Spleen (tissue), 13 donors: ENCODE measurements at regions of chr1 and their contacts with region 1.

Region 1: DNA sequence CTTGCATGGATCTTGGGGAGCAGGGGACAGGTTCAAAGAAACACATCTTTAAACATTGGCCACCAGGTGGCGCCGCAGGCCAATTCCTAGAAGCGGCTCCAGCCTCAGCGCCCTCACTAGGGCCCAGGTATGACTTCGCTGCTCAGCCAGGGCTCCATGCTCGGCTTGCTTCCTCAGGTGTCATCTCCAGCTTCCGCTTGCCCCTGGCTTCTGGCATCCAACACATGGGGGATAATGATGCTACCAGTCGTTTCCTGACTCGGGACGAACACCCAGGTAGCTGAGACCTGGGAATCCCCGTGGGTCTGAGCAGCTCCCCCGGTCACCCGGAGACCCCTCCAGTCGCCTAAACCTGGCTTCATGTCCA is 8.5 kb upstream of the MEX3A start:
- DNase-seq: peak; percentile 95
- H3K4me3 ChIP-seq: no peak overlapping the region
- H3K27ac ChIP-seq: peak overlapping the region in 1 of 8 donors; percentile 42
- H3K4me1 ChIP-seq: peaks cover 9 to 29% (median 17%) of the 10 kb centered on the region in 6 donors
- H3K27me3 ChIP-seq: peaks cover 0 to 8% (median 0%) of the 10 kb centered on the region in 7 donors
- CTCF ChIP-seq: peak; percentile 27 to 88 (median 82)
- POLR2A ChIP-seq: no peak

Region 2: DNA sequence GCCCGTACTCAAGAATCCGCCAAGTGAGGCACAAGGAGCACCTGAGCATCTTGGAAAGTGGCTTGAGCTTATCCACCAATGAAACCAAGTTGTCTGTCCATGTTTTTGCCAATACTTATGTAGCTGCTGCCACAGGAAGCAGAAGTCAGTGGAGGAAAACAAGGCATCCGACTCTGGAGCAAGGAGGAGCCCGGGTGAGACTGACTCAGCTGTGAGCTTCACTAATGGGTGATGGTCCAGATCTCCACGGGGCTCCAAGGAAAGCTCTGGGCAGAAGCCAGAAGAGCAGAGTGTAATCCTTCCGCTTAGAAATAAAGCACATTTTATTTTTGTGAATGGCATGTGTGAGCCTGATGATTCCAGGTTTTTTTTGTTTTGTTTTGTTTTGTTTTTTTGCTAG is 57.8 kb before region 1 on chr1:
- intact Hi-C with region 1: no loop called
- DNase-seq: no peak
- H3K4me3 ChIP-seq: no peak overlapping the region
- H3K27ac ChIP-seq: no peak overlapping the region
- H3K4me1 ChIP-seq: no peaks in the 10 kb centered on the region
- H3K27me3 ChIP-seq: no peaks in the 10 kb centered on the region
- CTCF ChIP-seq: no peak
- POLR2A ChIP-seq: no peak

Region 3: GRCh38 chr1:156129706-156130581 is 39.1 kb after region 1 on chr1:
- intact Hi-C with region 1: loop called (anchors 2 kb)
- DNase-seq: peak; percentile 89
- H3K4me3 ChIP-seq: no peak overlapping the region
- H3K27ac ChIP-seq: peak overlapping the region; percentile 71 to 92 (median 82)
- H3K4me1 ChIP-seq: peaks cover 43 to 66% (median 58%) of the 10 kb centered on the region in 6 donors
- H3K27me3 ChIP-seq: peaks cover 0 to 16% (median 0%) of the 10 kb centered on the region in 7 donors
- CTCF ChIP-seq: peak; percentile 97 to 99 (median 98)
- POLR2A ChIP-seq: no peak

Region 4: GRCh38 chr1:156225677-156226014 is 134.8 kb after region 1 on chr1:
- intact Hi-C with region 1: loop called (anchors 5 kb)
- DNase-seq: no peak
- H3K4me3 ChIP-seq: no peak overlapping the region
- H3K27ac ChIP-seq: peak overlapping the region in 4 of 8 donors; percentile 50 to 64 (median 52)
- H3K4me1 ChIP-seq: peaks cover 0 to 31% (median 10%) of the 10 kb centered on the region in 6 donors
- H3K27me3 ChIP-seq: no peaks in the 10 kb centered on the region
- CTCF ChIP-seq: peak in 3 of 11 experiments; percentile 4 to 47 (median 22)
- POLR2A ChIP-seq: no peak

Region 5: DNA sequence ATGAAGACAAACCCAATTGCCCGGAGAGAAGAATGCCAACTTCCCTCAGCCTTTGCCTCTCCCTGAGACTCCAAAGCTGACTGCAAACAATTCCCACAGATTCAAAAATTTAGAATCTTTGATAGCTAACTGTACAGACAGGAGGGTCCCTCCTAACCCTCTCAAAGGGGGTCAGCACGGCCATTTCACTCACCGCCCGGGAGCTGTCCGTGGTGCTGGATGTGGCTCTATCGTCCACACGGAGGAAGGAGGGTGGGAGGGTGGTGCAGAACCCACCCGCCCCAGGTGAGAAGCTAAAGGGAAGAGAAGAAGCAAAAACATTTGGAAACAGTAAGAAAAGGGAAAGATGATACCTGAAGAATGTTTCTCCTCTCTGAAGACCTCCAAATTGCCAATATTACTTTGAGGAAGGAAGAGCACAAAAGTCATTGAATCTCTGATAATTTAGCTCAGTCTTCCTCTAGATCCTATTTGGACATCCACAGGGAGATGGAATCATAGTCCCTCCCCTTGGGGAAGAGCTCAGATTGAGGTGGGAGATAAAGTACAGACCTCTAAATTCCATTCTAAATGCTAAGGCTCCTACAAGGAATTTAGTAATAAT is 323.8 kb after region 1 on chr1:
- intact Hi-C with region 1: no loop called
- DNase-seq: no peak
- H3K4me3 ChIP-seq: no peak overlapping the region
- H3K27ac ChIP-seq: no peak overlapping the region
- H3K4me1 ChIP-seq: peaks cover 0 to 11% (median under 1%) of the 10 kb centered on the region in 6 donors
- H3K27me3 ChIP-seq: peaks cover 0 to 97% (median 33%) of the 10 kb centered on the region in 7 donors
- CTCF ChIP-seq: no peak
- POLR2A ChIP-seq: no peak